CD8-positive, alpha-beta T cell (primary cell): ENCODE measurements at regions of chr2 and their contacts with region 1.

Region 1: DNA sequence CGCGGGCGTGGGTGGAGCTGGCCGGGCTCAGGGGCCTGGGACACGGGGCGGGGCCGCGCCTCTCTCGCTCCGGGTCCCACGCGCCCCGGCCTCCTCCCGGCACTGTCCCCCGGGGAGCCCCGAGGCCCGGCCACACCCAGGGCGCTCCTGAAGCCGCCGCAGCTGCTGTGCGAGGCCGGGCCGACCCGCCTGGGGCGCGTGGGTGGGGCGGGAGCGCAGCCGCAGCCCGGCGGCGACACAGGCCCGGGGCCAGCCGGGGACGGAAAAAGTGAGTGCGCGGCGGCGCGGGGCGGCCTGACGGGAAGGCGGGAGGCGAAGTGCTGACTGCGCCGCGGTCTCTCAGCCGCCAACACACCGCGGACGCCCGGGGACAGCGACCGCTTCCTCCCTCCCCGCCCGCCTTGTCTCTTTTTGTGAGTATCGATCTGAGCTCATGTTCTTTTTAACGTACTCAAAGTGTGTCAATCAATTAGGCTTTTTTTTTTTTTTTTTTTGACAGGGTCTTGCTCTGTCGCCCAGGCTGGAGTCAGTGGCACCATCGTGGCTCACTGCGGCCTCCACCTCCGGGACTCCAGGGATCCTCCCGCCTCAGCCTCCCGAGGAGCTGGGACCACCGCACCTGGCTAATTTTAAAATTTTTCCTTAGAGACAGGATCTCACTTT is 14.5 kb downstream of the PDCD1 start:
- DNase-seq: peak in 8 of 9 experiments; percentile 58 to 88 (median 76)
- ATAC-seq: peak; percentile 75
- H3K4me3 ChIP-seq: peak overlapping the region; percentile 37 to 53
- H3K4me3 Mint-ChIP-seq: peak overlapping the region; percentile 75
- H3K27ac ChIP-seq: peak overlapping the region in 1 of 2 experiments; percentile 23
- H3K27ac Mint-ChIP-seq: no peak overlapping the region
- H3K4me1 ChIP-seq: peaks cover 23% of the 10 kb centered on the region
- H3K4me1 Mint-ChIP-seq: peaks cover 28% of the 10 kb centered on the region
- H3K27me3 ChIP-seq: no peaks in the 10 kb centered on the region
- H3K27me3 Mint-ChIP-seq: peaks cover 2% of the 10 kb centered on the region
- CTCF ChIP-seq: no peak

Region 2: GRCh38 chr2:241859436-241860183 is 15.4 kb after region 1 on chr2:
- CTCF ChIA-PET with region 1: interaction called, 5 read pairs
- POLR2A ChIA-PET with region 1: interaction called, 4 read pairs
- intact Hi-C with region 1: loop called in 1 of 2 experiments (anchors 1 kb)
- DNase-seq: peak in 5 of 9 experiments; percentile 39 to 63 (median 54)
- ATAC-seq: peak; percentile 34
- H3K4me3 ChIP-seq: peak overlapping the region; percentile 24 to 57
- H3K4me3 Mint-ChIP-seq: peak overlapping the region; percentile 82
- H3K27ac ChIP-seq: peak overlapping the region in 1 of 2 experiments; percentile 72
- H3K27ac Mint-ChIP-seq: peak overlapping the region; percentile 93
- H3K4me1 ChIP-seq: peaks cover 43% of the 10 kb centered on the region
- H3K4me1 Mint-ChIP-seq: peaks cover 53% of the 10 kb centered on the region
- H3K27me3 ChIP-seq: peaks cover 0 to 20% of the 10 kb centered on the region in 2 experiments
- H3K27me3 Mint-ChIP-seq: peaks cover 15% of the 10 kb centered on the region
- CTCF ChIP-seq: no peak